Activated naive CD4-positive, alpha-beta T cell treated with anti-CD3 and anti-CD28 coated beads for 36 hours (primary cell): ENCODE measurements at regions of chr1 and their contacts with region 1.

Region 1: DNA sequence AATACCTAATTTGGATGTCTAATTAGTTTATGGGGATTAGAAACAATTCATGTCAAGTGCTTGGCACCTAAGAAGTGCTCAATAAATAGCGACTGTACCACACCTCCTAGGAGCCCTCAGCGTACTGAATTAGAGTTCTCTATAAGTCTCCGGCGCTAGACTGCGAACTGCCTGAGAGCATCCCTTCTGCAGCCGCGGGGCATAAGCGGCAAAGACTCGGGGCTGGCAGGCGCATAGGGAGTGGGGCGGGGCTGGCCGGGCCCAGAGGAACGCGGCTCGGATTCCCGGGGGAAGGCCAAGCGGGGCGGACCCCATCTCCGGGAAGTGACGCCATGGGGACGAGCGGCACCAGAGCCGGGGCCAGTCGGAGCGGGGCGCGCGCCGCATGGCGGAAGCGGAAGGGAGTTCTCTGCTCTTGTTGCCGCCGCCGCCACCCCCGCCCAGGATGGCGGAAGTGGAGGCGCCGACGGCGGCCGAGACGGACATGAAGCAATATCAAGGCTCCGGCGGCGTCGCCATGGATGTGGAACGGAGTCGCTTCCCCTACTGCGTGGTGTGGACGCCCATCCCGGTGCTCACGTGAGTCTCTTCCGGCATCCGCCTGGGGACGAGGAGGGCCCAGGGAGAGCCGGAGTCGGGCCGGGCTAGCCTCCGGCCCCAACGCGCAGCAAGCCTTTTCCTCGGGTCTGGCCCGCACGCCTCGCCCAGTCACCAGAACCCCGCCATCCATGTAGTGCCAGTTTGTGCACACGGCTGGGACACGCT is at the start of gene TMEM222:
- DNase-seq: peak; percentile 98
- H3K4me3 Mint-ChIP-seq: peak within 1 kb of the TSS; percentile 94
- H3K27ac Mint-ChIP-seq: peak within 1 kb of the TSS; percentile 86
- H3K4me1 Mint-ChIP-seq: peaks cover 45% of the 10 kb centered on the region
- H3K27me3 Mint-ChIP-seq: no peaks in the 10 kb centered on the region
- total RNA-seq, gene TMEM222: 22.0 to 22.8 TPM

Region 2: GRCh38 chr1:27154991-27155781 is 166.8 kb before region 1 on chr1 and contains the start of gene SLC9A1:
- CTCF ChIA-PET with region 1: interaction called, 3 read pairs
- intact Hi-C with region 1: loop called (anchors 1 kb)
- DNase-seq: peak; percentile 91
- H3K4me3 Mint-ChIP-seq: peak within 1 kb of the TSS; percentile 89
- H3K27ac Mint-ChIP-seq: peak within 1 kb of the TSS; percentile 98
- H3K4me1 Mint-ChIP-seq: peaks cover 47% of the 10 kb centered on the region
- H3K27me3 Mint-ChIP-seq: no peaks in the 10 kb centered on the region
- total RNA-seq, gene SLC9A1: 15.4 to 16.5 TPM

Region 3: GRCh38 chr1:27332536-27333281 is 10.7 kb after region 1 on chr1:
- CTCF ChIA-PET with region 1: interaction called, 22 read pairs
- intact Hi-C with region 1: no loop called
- DNase-seq: peak; percentile 68
- H3K4me3 Mint-ChIP-seq: no peak overlapping the region
- H3K27ac Mint-ChIP-seq: no peak overlapping the region
- H3K4me1 Mint-ChIP-seq: peaks cover 26% of the 10 kb centered on the region
- H3K27me3 Mint-ChIP-seq: no peaks in the 10 kb centered on the region

Region 4: GRCh38 chr1:27365372-27366112 is 43.5 kb after region 1 on chr1:
- CTCF ChIA-PET with region 1: no interaction called
- intact Hi-C with region 1: loop called (anchors 2 kb)
- DNase-seq: peak; percentile 87
- H3K4me3 Mint-ChIP-seq: peak overlapping the region; percentile 83
- H3K27ac Mint-ChIP-seq: peak overlapping the region; percentile 34
- H3K4me1 Mint-ChIP-seq: peaks cover 25% of the 10 kb centered on the region
- H3K27me3 Mint-ChIP-seq: no peaks in the 10 kb centered on the region

Region 5: GRCh38 chr1:27489910-27490741 is 168.1 kb after region 1 on chr1 and contains the start of gene WASF2:
- CTCF ChIA-PET with region 1: no interaction called
- intact Hi-C with region 1: loop called (anchors 1 kb)
- DNase-seq: peak; percentile 98
- H3K4me3 Mint-ChIP-seq: peak within 1 kb of the TSS; percentile 89
- H3K27ac Mint-ChIP-seq: peak within 1 kb of the TSS; percentile 99
- H3K4me1 Mint-ChIP-seq: peaks cover 30% of the 10 kb centered on the region
- H3K27me3 Mint-ChIP-seq: no peaks in the 10 kb centered on the region
- total RNA-seq, gene WASF2: 105 to 106 TPM

Region 6: GRCh38 chr1:27519331-27520258 is 197.6 kb after region 1 on chr1:
- CTCF ChIA-PET with region 1: no interaction called
- intact Hi-C with region 1: no loop called
- DNase-seq: no peak
- H3K4me3 Mint-ChIP-seq: no peak overlapping the region
- H3K27ac Mint-ChIP-seq: no peak overlapping the region
- H3K4me1 Mint-ChIP-seq: peaks cover 52% of the 10 kb centered on the region
- H3K27me3 Mint-ChIP-seq: no peaks in the 10 kb centered on the region